ENCODE measurements at regions of chr1 and their contacts with region 1.

Region 1: GRCh38 chr1:201348211-201348566 is 29.3 kb downstream of the TNNT2 start:
- DNase-seq: no peak
- H3K4me3 ChIP-seq: no peak overlapping the region
- H3K4me3 Mint-ChIP-seq: no peak overlapping the region
- H3K27ac ChIP-seq: no peak overlapping the region
- H3K27ac Mint-ChIP-seq: no peak overlapping the region
- H3K4me1 ChIP-seq: no peaks in the 10 kb centered on the region
- H3K4me1 Mint-ChIP-seq: no peaks in the 10 kb centered on the region
- H3K27me3 ChIP-seq: no peaks in the 10 kb centered on the region
- H3K27me3 Mint-ChIP-seq: peaks cover 21 to 22% of the 10 kb centered on the region in 2 donors

Region 2: DNA sequence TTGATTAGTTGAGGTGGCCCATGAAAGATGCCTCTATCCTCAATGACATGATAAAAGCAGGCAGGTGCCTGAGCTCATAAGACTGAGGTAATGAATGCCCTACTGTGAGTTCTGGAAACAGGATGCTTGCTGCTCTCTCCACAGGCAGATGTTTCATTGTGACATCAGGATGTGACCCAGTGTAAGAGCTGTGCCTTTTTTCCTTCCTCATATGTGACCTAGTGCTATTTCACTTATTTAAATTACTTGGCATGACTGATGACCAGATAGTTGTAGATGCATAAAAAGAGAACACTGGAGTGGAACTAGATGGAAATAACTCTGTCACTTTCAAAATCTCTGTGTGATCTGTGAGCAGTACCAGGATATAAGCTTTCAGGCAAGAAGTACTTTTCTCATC is 759.5 kb before region 1 on chr1:
- CTCF ChIA-PET with region 1: no interaction called
- POLR2A ChIA-PET with region 1: no interaction called
- intact Hi-C with region 1: no loop called
- DNase-seq: no peak
- H3K4me3 ChIP-seq: no peak overlapping the region
- H3K4me3 Mint-ChIP-seq: no peak overlapping the region
- H3K27ac ChIP-seq: no peak overlapping the region
- H3K27ac Mint-ChIP-seq: no peak overlapping the region
- H3K4me1 ChIP-seq: no peaks in the 10 kb centered on the region
- H3K4me1 Mint-ChIP-seq: no peaks in the 10 kb centered on the region
- H3K27me3 ChIP-seq: no peaks in the 10 kb centered on the region
- H3K27me3 Mint-ChIP-seq: no peaks in the 10 kb centered on the region

Region 3: DNA sequence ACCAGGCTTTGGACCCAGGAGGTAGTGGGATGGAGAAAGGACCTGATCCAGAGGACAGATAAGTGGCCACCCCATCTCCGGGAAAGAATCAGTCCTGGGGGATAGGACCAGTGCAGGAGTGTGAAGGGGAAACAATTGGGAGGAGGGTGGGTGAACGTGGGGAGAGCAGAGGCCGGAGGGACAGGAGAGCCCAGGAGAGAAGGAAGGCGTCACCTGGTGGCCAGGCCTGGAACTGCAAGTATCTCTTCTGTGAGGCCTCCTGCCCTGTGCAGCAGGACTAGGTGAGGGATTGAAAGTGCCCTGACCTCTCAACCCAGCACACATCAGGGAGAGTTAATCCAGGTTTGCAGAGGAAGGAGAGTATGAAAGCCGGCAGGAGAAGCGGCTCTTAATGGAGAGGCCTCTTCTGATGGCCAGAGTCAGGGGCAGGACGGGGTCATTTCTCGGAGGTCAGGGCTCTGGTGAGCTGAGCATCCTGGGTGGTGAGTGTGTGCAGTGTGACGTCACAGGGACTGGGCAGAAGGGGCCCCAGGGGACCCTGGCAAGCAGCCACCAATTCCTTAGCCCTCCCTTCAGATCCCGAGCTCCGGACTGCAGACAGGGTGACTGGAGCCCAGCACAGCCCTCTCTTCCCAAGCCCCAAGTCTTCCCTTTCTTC is 60.1 kb after region 1 on chr1:
- CTCF ChIA-PET with region 1: interaction called, 3 read pairs
- POLR2A ChIA-PET with region 1: no interaction called
- intact Hi-C with region 1: loop called (anchors 2 kb)
- DNase-seq: peak; percentile 41 to 62 (median 48)
- H3K4me3 ChIP-seq: no peak overlapping the region
- H3K4me3 Mint-ChIP-seq: no peak overlapping the region
- H3K27ac ChIP-seq: no peak overlapping the region
- H3K27ac Mint-ChIP-seq: no peak overlapping the region
- H3K4me1 ChIP-seq: no peaks in the 10 kb centered on the region
- H3K4me1 Mint-ChIP-seq: peaks cover 0 to 5% (median under 1%) of the 10 kb centered on the region in 4 donors
- H3K27me3 ChIP-seq: no peaks in the 10 kb centered on the region
- H3K27me3 Mint-ChIP-seq: peaks cover 3 to 8% of the 10 kb centered on the region in 2 donors